ENCODE measurements at regions of chr6 and their contacts with region 1.

Region 1: GRCh38 chr6:129672881-129673643 is 36.9 kb downstream of the ARHGAP18 start:
- DNase-seq: peak; percentile 76
- H3K4me3 Mint-ChIP-seq: peak overlapping the region; percentile 79
- H3K27ac Mint-ChIP-seq: peak overlapping the region; percentile 90
- H3K4me1 Mint-ChIP-seq: peaks cover 49% of the 10 kb centered on the region
- H3K27me3 Mint-ChIP-seq: no peaks in the 10 kb centered on the region

Region 2: GRCh38 chr6:129490521-129491245 is 182.4 kb before region 1 on chr6:
- intact Hi-C with region 1: loop called (anchors 2 kb)
- DNase-seq: peak; percentile 91
- H3K4me3 Mint-ChIP-seq: peak overlapping the region; percentile 84
- H3K27ac Mint-ChIP-seq: peak overlapping the region; percentile 98
- H3K4me1 Mint-ChIP-seq: peaks cover 61% of the 10 kb centered on the region
- H3K27me3 Mint-ChIP-seq: no peaks in the 10 kb centered on the region

Region 3: DNA sequence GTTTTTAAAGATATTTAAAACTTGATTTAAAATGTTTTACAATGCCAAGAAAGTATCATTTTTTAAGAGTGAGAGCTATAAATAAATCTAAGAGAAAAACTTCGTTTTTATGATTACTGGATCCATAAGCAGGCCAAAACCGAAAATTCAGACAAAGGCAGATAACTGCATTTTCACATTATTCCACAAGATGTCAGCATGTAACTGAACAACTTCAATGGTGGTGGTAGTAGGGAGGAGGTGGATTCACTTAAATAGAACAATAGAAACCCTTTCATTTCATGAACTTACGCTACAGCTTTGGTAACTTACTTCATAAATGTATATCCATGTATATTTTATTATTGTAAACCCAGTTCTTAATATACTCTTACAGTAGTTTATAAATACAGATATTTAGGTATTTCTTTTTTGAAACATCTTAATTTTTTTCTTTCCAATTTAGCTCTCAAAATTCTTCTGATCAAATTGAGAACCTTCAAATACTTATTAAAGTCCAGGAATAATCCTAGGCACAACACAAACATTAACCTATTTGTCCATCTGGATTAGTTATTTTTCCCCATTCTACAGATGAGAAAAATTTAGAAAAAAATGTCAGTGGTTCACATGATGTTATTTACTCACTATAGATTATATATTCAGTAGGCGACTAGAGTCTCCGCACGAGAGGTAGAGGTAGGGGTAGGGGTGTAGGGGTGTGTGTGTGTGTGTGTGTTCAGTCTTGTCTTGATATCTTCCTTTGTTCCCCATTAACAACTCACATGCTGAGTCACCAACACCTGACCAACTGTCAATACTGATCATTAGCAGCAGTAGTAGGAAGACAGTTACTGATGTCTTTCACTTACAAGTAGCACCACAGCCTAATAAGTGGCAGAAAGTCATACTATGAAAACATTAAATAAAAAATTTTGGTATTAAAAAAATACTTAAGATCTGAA is 74.5 kb before region 1 on chr6:
- intact Hi-C with region 1: loop called (anchors 2 kb)
- DNase-seq: peak; percentile 84
- H3K4me3 Mint-ChIP-seq: no peak overlapping the region
- H3K27ac Mint-ChIP-seq: no peak overlapping the region
- H3K4me1 Mint-ChIP-seq: peaks cover 1% of the 10 kb centered on the region
- H3K27me3 Mint-ChIP-seq: no peaks in the 10 kb centered on the region

Region 4: GRCh38 chr6:129635396-129636130 is 37.5 kb before region 1 on chr6:
- intact Hi-C with region 1: no loop called
- DNase-seq: no peak
- H3K4me3 Mint-ChIP-seq: no peak overlapping the region
- H3K27ac Mint-ChIP-seq: no peak overlapping the region
- H3K4me1 Mint-ChIP-seq: no peaks in the 10 kb centered on the region
- H3K27me3 Mint-ChIP-seq: no peaks in the 10 kb centered on the region

Region 5: GRCh38 chr6:129683601-129684322 is 10.7 kb after region 1 on chr6:
- intact Hi-C with region 1: loop called (anchors 1 kb)
- DNase-seq: peak; percentile 88
- H3K4me3 Mint-ChIP-seq: peak overlapping the region; percentile 68
- H3K27ac Mint-ChIP-seq: peak overlapping the region; percentile 84
- H3K4me1 Mint-ChIP-seq: peaks cover 54% of the 10 kb centered on the region
- H3K27me3 Mint-ChIP-seq: no peaks in the 10 kb centered on the region

Region 6: DNA sequence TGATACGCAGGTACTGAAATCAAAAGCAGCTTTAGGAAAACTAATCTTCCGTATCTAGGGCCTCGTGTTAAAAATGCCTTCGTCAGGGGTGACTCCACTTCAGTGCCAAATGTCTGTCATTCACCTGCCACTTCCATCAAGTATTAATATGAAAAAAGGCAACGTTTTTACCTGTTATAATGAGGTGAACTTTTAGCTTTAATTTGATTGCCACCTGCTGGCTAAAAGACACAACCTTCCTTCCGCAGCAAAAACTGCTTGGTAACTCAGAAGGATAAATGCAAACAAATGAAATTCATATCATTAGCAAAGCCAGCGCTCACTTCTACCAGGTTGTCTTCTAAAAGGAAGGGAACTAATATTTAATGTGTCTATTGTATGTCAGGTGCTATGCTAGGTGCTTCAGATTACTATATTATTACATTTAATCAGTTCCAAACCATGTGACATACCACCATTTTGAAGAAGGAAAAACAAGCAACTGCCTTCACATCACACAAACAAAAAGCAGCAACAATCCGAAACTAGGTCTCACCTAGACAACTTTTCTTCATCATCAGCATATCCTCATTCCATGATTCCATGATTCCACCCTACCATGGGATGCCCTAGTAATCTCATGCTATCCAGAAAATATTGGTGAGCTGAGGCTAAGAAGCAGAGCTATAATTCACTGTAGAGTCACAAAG is 57.6 kb after region 1 on chr6:
- intact Hi-C with region 1: loop called (anchors 1 kb)
- DNase-seq: peak; percentile 80
- H3K4me3 Mint-ChIP-seq: no peak overlapping the region
- H3K27ac Mint-ChIP-seq: no peak overlapping the region
- H3K4me1 Mint-ChIP-seq: peaks cover 12% of the 10 kb centered on the region
- H3K27me3 Mint-ChIP-seq: no peaks in the 10 kb centered on the region

Region 7: GRCh38 chr6:130020907-130021629 is 348.0 kb after region 1 on chr6:
- intact Hi-C with region 1: loop called (anchors 1 kb)
- DNase-seq: peak; percentile 94
- H3K4me3 Mint-ChIP-seq: peak overlapping the region; percentile 95
- H3K27ac Mint-ChIP-seq: peak overlapping the region; percentile 93
- H3K4me1 Mint-ChIP-seq: peaks cover 17% of the 10 kb centered on the region
- H3K27me3 Mint-ChIP-seq: peaks cover 12% of the 10 kb centered on the region

Region 8: GRCh38 chr6:130513770-130514169 is 840.7 kb after region 1 on chr6:
- intact Hi-C with region 1: loop called (anchors 5 kb)
- DNase-seq: peak; percentile 94
- H3K4me3 Mint-ChIP-seq: peak overlapping the region; percentile 70
- H3K27ac Mint-ChIP-seq: peak overlapping the region; percentile 95
- H3K4me1 Mint-ChIP-seq: peaks cover 51% of the 10 kb centered on the region
- H3K27me3 Mint-ChIP-seq: no peaks in the 10 kb centered on the region

Measured in activated CD4-positive, alpha-beta T cell treated with anti-CD3 and anti-CD28 coated beads, Interleukin-2, amount 10 ng/mL, durations not matched to agents 24 days and 14 days (primary cell).